WTC11 (cell line): ENCODE measurements at regions of chr6 and their contacts with region 1.

Region 1: GRCh38 chr6:30730601-30731435 is 10.7 kb downstream of the TUBB start:
- DNase-seq: peak; percentile 88
- ATAC-seq: peak; percentile 65
- H3K4me3 Mint-ChIP-seq: no peak overlapping the region
- H3K27ac Mint-ChIP-seq: peak overlapping the region; percentile 36; the same call in 1 of the 2 replicates
- H3K4me1 Mint-ChIP-seq: peaks cover 3% of the 10 kb centered on the region; the same call in 1 of the 2 replicates
- H3K27me3 Mint-ChIP-seq: no peaks in the 10 kb centered on the region
- CTCF ChIP-seq: peak; percentile 19; the same call in 1 of the 2 replicates

Region 2: DNA sequence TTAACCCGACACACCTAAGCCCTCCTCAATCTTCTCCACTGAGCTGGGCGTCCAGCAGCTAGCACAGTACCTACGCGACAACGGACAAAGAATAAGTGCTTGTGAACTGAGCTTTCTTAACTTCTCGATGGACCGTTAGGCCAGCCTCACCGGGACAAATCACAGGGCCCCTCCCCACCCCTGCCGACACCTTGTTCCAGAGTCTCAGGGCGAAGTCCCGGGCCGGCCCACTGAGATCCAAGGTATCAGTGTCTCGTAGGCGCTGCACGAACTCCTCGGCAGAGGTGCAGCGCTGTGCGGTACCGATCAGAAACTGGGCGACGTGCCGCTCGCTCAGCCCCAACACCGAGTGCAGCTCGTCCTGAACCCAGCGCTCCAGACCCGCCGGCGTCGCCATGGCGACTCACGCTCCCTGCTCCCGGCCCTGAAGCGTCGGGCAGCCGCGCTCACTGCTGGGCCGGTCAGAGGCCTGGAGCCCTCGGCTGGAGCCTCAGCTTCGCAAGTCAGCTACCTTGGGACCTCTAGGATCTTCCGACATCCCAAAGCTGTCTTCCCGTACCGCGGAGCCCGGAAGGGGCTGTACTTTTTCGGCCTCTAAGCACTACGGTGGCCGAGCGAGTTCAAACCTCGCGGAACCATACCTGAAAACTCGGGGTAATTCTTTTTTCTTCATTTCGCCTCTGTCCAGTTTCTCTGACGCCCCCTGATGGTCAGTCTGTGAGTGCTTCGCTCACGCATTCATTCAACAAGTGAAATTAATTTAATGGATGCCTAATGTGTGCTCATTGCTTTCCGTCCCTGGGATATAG is 58.2 kb before region 1 on chr6 and contains the start of gene DHX16:
- CTCF ChIA-PET with region 1: interaction called, 131 read pairs
- POLR2A ChIA-PET with region 1: interaction called, 3 read pairs
- DNase-seq: peak; percentile 89
- ATAC-seq: peak; percentile 83
- H3K4me3 Mint-ChIP-seq: peak within 1 kb of the TSS; percentile 93
- H3K27ac Mint-ChIP-seq: peak within 1 kb of the TSS; percentile 58
- H3K4me1 Mint-ChIP-seq: peaks cover 8% of the 10 kb centered on the region
- H3K27me3 Mint-ChIP-seq: no peaks in the 10 kb centered on the region
- CTCF ChIP-seq: peak; percentile 40; the same call in 1 of the 2 replicates
- total RNA-seq, gene DHX16: 27.3 to 32.2 TPM (median 30.6 TPM) in 3 replicates

Region 3: DNA sequence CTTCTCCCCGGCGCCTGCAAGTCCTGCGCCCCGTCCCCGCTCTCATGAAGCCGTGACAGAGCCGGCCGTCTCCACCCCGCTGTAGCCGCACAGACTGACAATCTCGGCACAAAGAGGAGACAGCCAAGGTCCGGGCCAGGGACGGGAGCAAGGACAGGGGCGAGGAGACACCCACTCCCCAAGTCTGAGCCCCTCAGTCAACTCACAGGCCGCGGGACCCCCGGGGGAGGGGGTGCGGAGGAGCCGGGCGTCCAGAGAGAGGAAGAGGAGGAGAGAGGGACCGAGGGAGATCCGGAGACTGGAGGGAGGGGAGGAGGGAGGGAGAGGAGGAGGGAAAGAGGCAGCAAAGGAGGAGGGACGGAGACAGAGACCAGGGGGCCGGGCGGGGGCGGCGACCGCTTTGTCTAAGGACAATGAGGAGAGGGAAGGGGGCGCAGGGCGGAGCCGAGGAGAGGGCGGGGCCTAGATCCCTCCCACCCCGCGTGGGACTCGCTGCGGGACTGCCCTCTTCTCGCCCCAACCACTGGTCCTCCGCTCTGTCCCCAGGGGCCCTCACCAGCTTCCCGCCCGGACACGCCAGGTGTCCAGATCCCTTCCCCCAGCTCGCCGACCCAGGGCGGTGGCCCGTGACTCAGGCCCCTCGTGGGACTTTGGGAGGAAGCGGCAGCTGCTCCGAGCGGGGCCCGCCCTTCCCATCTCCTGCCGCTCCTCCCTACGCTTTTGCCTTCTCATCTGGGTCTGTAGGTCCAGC is 43.7 kb before region 1 on chr6:
- CTCF ChIA-PET with region 1: interaction called, 131 read pairs
- POLR2A ChIA-PET with region 1: interaction called, 4 read pairs
- DNase-seq: peak; percentile 92
- ATAC-seq: peak; percentile 43
- H3K4me3 Mint-ChIP-seq: peak overlapping the region; percentile 80
- H3K27ac Mint-ChIP-seq: 0 out of 2 replicates have a peak overlapping the region, but pooled peaks have one; percentile 39
- H3K4me1 Mint-ChIP-seq: peaks cover 75% of the 10 kb centered on the region
- H3K27me3 Mint-ChIP-seq: no peaks in the 10 kb centered on the region
- CTCF ChIP-seq: no peak

Region 4: DNA sequence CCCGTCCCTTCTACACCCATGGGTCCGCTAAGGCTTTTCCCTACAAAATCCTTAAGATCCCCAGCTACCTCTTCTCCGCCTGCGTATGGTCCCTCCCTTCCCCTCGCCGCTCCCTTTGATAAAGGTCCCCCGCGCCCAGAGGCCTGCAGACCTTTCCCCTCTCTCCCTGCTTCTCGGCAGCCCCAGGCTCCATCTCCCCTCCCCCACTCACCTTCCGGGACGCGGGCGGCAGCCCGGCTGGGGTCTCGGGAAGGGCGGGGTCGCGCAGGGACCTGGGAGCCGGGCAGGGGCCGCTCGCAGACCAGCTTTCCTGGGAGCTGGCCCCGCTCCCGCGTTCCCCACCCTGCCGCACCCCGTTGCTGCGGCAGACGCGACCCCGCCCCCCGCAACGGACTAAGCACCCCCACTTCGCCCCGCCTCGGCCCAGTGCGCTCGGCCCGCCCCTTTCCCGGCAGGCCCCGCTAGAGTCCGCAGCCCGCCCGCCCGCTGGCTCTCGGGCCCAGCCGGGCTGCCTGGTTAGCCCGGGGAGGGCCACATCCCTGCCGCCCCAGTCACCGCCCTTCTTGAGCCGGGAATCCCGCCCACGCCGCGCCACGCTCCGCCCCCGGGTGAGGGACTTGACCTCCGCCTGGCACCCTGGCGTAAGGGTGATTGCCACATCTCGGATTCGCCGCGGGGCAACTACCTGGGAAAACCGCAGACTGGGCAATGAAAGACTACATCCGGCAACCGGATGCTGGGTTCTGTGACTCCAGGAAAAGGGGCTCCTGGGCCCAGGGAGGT is 11.7 kb after region 1 on chr6 and contains the start of gene FLOT1:
- CTCF ChIA-PET with region 1: interaction called, 13 read pairs
- POLR2A ChIA-PET with region 1: interaction called, 4 read pairs
- DNase-seq: peak; percentile 95
- ATAC-seq: peak; percentile 76
- H3K4me3 Mint-ChIP-seq: peak within 1 kb of the TSS; percentile 98
- H3K27ac Mint-ChIP-seq: peak within 1 kb of the TSS; percentile 91
- H3K4me1 Mint-ChIP-seq: peaks cover 25% of the 10 kb centered on the region
- H3K27me3 Mint-ChIP-seq: peaks cover 5% of the 10 kb centered on the region; the same call in 1 of the 2 replicates
- CTCF ChIP-seq: no peak
- total RNA-seq, gene FLOT1: 110 to 121 TPM (median 120 TPM) in 3 replicates

Region 5: DNA sequence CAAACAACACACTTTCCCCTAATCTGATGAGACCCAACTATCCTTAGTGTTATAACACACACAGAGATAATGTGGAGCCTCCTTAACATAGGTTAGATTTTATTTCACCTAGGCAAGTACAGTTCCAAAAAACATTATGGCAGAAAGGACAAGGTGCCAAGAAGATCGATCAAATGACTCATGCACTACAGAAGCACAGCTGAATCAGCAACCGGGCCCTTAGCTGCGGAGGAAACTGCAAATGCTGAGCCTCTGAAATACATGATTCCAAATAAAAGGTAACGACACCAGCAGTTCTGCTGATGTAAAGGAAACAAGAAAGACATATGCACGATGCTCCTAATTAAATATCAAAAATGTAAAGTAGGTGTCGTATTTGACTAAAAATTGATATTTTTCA is 232.8 kb after region 1 on chr6:
- CTCF ChIA-PET with region 1: no interaction called
- POLR2A ChIA-PET with region 1: no interaction called
- DNase-seq: no peak
- ATAC-seq: no peak
- H3K4me3 Mint-ChIP-seq: no peak overlapping the region
- H3K27ac Mint-ChIP-seq: no peak overlapping the region
- H3K4me1 Mint-ChIP-seq: peaks cover 4% of the 10 kb centered on the region; the same call in 1 of the 2 replicates
- H3K27me3 Mint-ChIP-seq: peaks cover 8% of the 10 kb centered on the region
- CTCF ChIP-seq: no peak